ENCODE measurements at regions of chr2 and their contacts with region 1.

Region 1: GRCh38 chr2:200864176-200864976 is at the start of gene CLK1:
- DNase-seq: peak; percentile 97
- H3K4me3 Mint-ChIP-seq: peak within 1 kb of the TSS; percentile 94
- H3K27ac Mint-ChIP-seq: peak within 1 kb of the TSS; percentile 100
- H3K4me1 Mint-ChIP-seq: peaks cover 53% of the 10 kb centered on the region
- H3K27me3 Mint-ChIP-seq: no peaks in the 10 kb centered on the region
- total RNA-seq, gene CLK1: 164 to 169 TPM

Region 2: DNA sequence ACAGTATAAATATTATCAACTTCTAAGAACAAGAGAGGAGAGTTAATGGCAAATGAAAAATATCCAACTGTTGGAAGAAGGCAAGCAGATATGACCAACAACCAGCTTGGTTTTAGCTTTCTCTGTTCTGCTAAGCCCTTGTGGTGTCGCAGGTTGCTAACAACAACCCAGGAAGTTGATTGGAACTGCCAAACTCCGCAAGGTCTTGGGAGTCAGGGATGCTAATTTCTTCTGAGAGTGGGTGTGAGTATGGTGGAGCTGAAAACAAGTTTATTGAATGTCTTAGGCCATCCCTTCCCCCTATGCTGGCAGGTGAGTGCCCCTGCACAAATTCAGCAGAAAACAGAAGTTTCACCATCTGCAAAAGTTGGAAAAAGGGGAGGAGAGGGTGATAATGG is 35.1 kb before region 1 on chr2:
- CTCF ChIA-PET with region 1: no interaction called
- POLR2A ChIA-PET with region 1: interaction called, 13 read pairs
- DNase-seq: no peak
- H3K4me3 Mint-ChIP-seq: no peak overlapping the region
- H3K27ac Mint-ChIP-seq: no peak overlapping the region
- H3K4me1 Mint-ChIP-seq: no peaks in the 10 kb centered on the region
- H3K27me3 Mint-ChIP-seq: no peaks in the 10 kb centered on the region

Region 3: DNA sequence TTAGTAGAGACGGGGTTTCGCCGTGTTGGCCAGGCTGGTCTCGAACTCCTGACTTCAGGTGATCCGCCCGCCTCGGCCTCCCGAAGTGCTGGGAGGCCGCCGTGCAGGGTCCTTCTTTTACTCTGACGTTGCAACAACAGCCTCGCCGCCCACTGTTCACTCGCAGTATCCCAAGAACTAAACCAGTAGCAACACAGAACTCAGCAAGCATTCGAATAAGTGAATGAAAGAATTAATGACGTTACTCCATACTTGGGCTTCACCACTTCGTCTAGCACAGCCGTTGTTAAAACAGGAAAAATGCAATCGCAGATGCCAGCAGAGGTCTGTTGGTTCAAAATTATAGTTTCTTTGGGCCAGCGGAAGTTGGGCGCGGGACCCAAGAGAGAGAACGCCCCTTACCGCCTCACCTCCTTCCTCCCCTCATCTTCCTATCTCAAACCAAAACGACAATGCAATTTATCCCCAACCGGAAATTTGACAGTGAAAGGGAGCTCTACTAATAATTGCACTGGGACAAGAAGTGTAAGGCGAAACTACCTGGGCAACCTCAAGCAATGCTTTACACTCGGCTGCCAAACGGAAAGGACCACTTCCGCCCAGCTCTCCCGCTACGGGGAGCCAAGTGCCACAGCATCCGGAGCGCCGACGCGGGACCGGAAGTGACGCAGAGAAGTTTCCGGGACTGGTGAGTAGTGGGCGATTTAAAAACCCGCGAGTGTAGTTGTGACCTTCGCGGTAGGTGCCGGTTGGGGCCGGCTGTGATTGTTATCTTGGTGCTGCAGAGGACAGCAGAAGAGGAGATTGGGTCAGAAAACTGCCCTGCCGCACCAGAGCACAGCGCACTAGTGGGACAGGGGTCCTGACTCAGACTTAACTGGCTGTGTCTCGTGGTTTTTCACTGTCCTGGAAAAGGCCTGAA is 24.6 kb after region 1 on chr2 and contains the starts of genes NIF3L1 and PPIL3:
- CTCF ChIA-PET with region 1: interaction called, 16 read pairs
- POLR2A ChIA-PET with region 1: interaction called, 199 read pairs
- DNase-seq: peak; percentile 98
- H3K4me3 Mint-ChIP-seq: peak within 1 kb of the TSS; percentile 89
- H3K27ac Mint-ChIP-seq: peak within 1 kb of the TSS; percentile 99
- H3K4me1 Mint-ChIP-seq: peaks cover 58% of the 10 kb centered on the region
- H3K27me3 Mint-ChIP-seq: no peaks in the 10 kb centered on the region
- total RNA-seq, gene NIF3L1: 28.9 to 30.1 TPM
- total RNA-seq, gene PPIL3: 101 to 102 TPM

Region 4: DNA sequence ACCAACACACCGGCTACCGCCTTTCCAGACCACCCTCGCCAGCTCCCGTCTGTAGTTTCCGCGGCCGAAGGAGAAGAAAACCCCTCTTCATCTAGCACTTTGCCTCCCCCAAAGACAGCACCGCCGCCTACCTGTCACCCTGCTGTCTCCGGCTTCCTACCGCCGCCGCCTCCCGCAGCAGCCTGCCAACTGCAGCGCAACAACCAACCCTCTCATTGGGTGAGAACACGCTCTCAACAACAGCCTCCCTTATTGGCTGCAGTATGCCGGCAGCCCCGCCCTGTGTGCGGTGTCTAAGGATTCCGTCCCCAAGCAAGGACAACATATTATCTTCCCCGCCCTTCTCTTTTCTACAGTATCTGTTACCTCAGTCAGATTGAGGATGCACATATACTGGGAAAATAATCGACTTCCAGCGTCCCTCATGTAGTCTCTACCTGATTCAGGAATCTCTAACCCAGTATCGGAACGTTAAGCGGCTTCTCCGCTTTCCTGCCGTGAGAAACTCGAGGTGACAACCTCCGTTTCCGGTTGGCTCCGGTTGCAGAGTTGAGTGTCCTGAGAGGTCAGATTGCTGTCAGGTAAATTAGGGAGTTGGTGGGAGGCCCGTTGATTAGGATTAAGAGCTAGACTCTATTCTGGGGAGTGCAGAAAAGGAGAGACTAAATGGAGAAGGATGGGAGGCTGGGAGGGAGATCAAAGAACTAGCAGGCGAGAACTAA is 207.3 kb after region 1 on chr2 and contains the starts of genes HYCC2 and NDUFB3:
- CTCF ChIA-PET with region 1: no interaction called
- POLR2A ChIA-PET with region 1: interaction called, 13 read pairs
- DNase-seq: peak; percentile 95
- H3K4me3 Mint-ChIP-seq: peak within 1 kb of the TSS; percentile 96
- H3K27ac Mint-ChIP-seq: peak within 1 kb of the TSS; percentile 88
- H3K4me1 Mint-ChIP-seq: peaks cover 57% of the 10 kb centered on the region
- H3K27me3 Mint-ChIP-seq: no peaks in the 10 kb centered on the region
- total RNA-seq, gene HYCC2: 27.9 to 31.9 TPM
- total RNA-seq, gene NDUFB3: 133 to 135 TPM

Region 5: DNA sequence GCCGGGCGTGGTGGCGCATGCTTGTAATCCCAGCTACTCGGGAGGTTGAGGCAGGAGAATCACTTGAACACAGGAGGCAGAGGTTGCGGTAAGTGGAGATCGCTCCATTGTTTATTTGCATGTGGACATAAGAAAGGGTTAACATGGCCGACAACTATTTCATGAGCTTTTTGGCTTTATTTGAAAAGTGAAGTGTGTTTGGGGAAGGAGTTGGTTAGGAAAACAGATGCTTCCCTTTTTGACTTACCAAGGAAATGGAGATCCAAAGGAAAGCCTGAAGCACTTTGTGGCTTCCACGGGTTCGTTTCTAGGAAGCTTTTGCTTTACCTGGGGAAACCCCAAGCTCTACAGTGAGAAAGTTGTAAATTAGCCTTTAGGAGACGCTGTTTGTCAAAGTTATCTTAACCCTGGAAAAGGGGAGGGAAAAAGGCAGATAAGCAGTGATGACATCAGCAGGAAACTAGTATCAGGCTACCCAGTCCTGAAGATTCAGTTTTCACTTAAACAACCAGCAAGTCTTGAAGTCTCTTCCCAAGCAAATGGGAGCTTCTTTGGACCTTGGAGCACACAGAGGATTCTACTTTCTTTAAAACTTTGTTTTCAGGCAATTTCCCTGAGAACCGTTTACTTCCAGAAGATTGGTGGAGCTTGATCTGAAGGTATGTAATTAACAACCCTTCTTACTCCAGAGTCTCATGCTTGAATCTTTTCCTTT is 318.4 kb after region 1 on chr2 and contains the start of gene CASP10:
- CTCF ChIA-PET with region 1: no interaction called
- POLR2A ChIA-PET with region 1: interaction called, 14 read pairs
- DNase-seq: no peak
- H3K4me3 Mint-ChIP-seq: peak within 1 kb of the TSS; percentile 98
- H3K27ac Mint-ChIP-seq: peak within 1 kb of the TSS; percentile 84
- H3K4me1 Mint-ChIP-seq: peaks cover 57% of the 10 kb centered on the region
- H3K27me3 Mint-ChIP-seq: no peaks in the 10 kb centered on the region
- total RNA-seq, gene CASP10: 47.8 to 51.3 TPM

Region 6: DNA sequence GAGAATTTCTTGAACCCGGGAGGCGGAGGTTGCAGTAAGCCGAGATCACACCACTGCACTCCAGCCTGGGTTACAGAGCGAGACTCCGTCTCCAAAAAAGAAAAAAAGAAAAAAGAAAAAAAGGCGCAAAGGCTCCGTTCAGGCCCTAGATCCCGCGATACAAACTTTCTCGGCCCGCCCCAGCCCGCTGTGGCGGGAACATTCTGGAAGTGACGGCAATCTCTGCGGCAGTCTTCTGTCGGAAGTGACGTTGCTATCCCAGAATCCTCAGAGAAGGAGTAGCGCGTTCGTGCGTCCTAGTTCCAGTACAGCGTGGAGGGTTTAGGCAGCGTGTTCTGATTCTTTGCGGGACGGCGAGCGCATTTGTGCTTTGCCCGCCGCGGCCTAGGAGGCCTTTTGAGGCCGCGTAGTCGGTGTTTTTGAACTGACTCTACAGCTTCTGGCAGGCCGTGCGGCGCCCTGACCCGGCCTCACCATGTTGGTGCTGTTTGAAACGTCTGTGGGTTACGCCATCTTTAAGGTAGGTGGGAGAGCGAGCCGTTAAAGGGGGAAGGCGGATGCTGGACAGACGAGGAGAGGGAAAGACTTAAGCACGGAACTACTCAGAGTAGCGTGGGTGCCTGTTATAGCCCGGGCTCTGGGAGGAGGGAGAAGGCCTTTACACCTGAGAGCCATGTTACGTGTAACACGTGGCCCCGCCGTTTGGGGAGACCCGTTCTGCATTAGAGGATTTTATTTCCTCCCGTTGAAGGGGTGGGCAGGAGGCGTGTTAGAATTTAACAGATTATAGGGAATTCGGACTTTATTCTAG is 1401.3 kb after region 1 on chr2 and contains the start of gene NOP58:
- CTCF ChIA-PET with region 1: no interaction called
- POLR2A ChIA-PET with region 1: interaction called, 12 read pairs
- DNase-seq: peak; percentile 94
- H3K4me3 Mint-ChIP-seq: peak within 1 kb of the TSS; percentile 49
- H3K27ac Mint-ChIP-seq: peak within 1 kb of the TSS; percentile 64
- H3K4me1 Mint-ChIP-seq: peaks cover 25% of the 10 kb centered on the region
- H3K27me3 Mint-ChIP-seq: no peaks in the 10 kb centered on the region
- total RNA-seq, gene NOP58: 103 to 108 TPM

Measured in activated CD4-positive, alpha-beta memory T cell treated with anti-CD3 and anti-CD28 coated beads, Interleukin-2, amount 10 ng/mL, durations not matched to agents 7 days and 5 days (primary cell).